ENCODE measurements at regions of chr6 and their contacts with region 1.

Region 1: DNA sequence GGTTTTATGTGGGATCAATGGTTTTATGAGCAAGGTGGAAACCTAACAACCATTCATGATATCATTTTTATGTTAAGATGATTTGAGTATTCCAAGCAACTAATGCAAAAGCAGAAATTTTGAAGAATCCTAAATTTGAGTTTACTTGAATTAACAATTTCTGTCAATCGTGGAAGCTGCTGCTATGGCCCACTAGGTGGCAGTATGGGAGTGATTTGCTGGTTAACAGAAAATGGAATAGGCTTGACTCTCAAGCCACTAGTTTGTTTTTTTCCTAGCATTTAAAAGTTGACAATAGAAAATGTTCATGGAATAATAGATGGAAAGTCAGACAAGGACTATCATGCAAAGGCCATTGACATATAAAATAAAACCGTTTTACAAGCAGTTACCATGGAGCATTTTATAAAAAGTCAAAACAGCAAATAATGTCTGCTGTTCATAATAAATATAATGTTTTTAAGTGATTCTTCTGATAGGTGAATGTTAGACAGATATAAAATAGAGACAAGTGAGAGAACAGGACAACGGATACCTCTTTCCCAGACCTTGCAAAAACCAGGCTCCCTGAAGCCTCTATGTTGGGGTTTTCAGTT is 43.0 kb upstream of the TMEM200A start:
- DNase-seq: peak in 1 of 2 donors; percentile 28
- H3K4me3 ChIP-seq: no peak overlapping the region
- H3K27ac ChIP-seq: no peak overlapping the region
- H3K4me1 ChIP-seq: no peaks in the 10 kb centered on the region
- H3K27me3 ChIP-seq: no peaks in the 10 kb centered on the region
- CTCF ChIP-seq: peak; percentile 78 to 88

Region 2: DNA sequence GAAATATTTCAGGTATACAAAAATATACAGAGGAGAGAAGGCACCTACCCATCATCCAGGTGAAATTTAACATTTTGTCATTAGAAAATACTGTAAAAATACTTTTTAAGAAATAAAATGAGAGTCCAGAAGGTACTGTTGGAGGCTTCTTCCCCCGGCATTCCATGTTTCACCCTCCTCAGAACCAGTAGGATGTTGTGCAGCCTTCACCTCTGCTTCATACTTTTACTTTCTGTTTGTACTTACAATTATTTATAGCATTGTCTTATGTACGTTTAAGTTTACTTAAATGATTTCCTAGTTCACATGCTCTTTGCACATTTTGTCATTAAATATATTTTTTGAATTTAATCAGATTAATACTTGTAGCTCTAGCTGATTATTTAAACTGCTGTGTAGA is 74.0 kb after region 1 on chr6:
- intact Hi-C with region 1: no loop called
- DNase-seq: no peak
- H3K4me3 ChIP-seq: no peak overlapping the region
- H3K27ac ChIP-seq: no peak overlapping the region
- H3K4me1 ChIP-seq: no peaks in the 10 kb centered on the region
- H3K27me3 ChIP-seq: no peaks in the 10 kb centered on the region
- CTCF ChIP-seq: no peak

Region 3: GRCh38 chr6:130699742-130700141 is 377.0 kb after region 1 on chr6:
- intact Hi-C with region 1: loop called (anchors 5 kb)
- DNase-seq: no peak
- H3K4me3 ChIP-seq: no peak overlapping the region
- H3K27ac ChIP-seq: no peak overlapping the region
- H3K4me1 ChIP-seq: peaks cover 0 to 6% (median 0%) of the 10 kb centered on the region in 4 donors
- H3K27me3 ChIP-seq: no peaks in the 10 kb centered on the region
- CTCF ChIP-seq: no peak

Region 4: GRCh38 chr6:130843575-130844320 is 521.0 kb after region 1 on chr6:
- intact Hi-C with region 1: loop called (anchors 10 kb)
- DNase-seq: no peak
- H3K4me3 ChIP-seq: no peak overlapping the region
- H3K27ac ChIP-seq: peak overlapping the region; percentile 1 to 25
- H3K4me1 ChIP-seq: peaks cover 0 to 39% (median 7%) of the 10 kb centered on the region in 4 donors
- H3K27me3 ChIP-seq: no peaks in the 10 kb centered on the region
- CTCF ChIP-seq: peak; percentile 39 to 59